ENCODE measurements at regions of chr9 and their contacts with region 1.

Region 1: GRCh38 chr9:87250205-87250604 is 247.5 kb upstream of the DAPK1 start:
- DNase-seq: no peak
- H3K4me3 ChIP-seq: no peak overlapping the region
- H3K27ac ChIP-seq: no peak overlapping the region
- H3K4me1 ChIP-seq: peaks cover 25% of the 10 kb centered on the region
- H3K27me3 ChIP-seq: no peaks in the 10 kb centered on the region
- CTCF ChIP-seq: peak in 1 of 2 donors; percentile 1

Region 2: GRCh38 chr9:87212560-87213159 is 37.5 kb before region 1 on chr9:
- CTCF ChIA-PET with region 1: no interaction called
- dilution Hi-C with region 1: loop called (anchors 5 kb)
- in situ Hi-C with region 1: no loop called
- intact Hi-C with region 1: no loop called
- DNase-seq: peak; percentile 94
- H3K4me3 ChIP-seq: no peak overlapping the region
- H3K27ac ChIP-seq: peak overlapping the region; percentile 22
- H3K4me1 ChIP-seq: peaks cover 23% of the 10 kb centered on the region
- H3K27me3 ChIP-seq: no peaks in the 10 kb centered on the region
- CTCF ChIP-seq: no peak

Region 3: GRCh38 chr9:87292449-87293191 is 42.4 kb after region 1 on chr9:
- CTCF ChIA-PET with region 1: no interaction called
- dilution Hi-C with region 1: no loop called
- in situ Hi-C with region 1: no loop called
- intact Hi-C with region 1: no loop called
- DNase-seq: no peak
- H3K4me3 ChIP-seq: no peak overlapping the region
- H3K27ac ChIP-seq: no peak overlapping the region
- H3K4me1 ChIP-seq: peaks cover 6% of the 10 kb centered on the region
- H3K27me3 ChIP-seq: no peaks in the 10 kb centered on the region
- CTCF ChIP-seq: no peak

Region 4: GRCh38 chr9:87569518-87569917 is 319.3 kb after region 1 on chr9:
- CTCF ChIA-PET with region 1: no interaction called
- dilution Hi-C with region 1: no loop called
- in situ Hi-C with region 1: no loop called
- intact Hi-C with region 1: no loop called
- DNase-seq: no peak
- H3K4me3 ChIP-seq: no peak overlapping the region
- H3K27ac ChIP-seq: no peak overlapping the region
- H3K4me1 ChIP-seq: no peaks in the 10 kb centered on the region
- H3K27me3 ChIP-seq: no peaks in the 10 kb centered on the region
- CTCF ChIP-seq: no peak